ENCODE measurements at regions of chr17 and their contacts with region 1.

Region 1: DNA sequence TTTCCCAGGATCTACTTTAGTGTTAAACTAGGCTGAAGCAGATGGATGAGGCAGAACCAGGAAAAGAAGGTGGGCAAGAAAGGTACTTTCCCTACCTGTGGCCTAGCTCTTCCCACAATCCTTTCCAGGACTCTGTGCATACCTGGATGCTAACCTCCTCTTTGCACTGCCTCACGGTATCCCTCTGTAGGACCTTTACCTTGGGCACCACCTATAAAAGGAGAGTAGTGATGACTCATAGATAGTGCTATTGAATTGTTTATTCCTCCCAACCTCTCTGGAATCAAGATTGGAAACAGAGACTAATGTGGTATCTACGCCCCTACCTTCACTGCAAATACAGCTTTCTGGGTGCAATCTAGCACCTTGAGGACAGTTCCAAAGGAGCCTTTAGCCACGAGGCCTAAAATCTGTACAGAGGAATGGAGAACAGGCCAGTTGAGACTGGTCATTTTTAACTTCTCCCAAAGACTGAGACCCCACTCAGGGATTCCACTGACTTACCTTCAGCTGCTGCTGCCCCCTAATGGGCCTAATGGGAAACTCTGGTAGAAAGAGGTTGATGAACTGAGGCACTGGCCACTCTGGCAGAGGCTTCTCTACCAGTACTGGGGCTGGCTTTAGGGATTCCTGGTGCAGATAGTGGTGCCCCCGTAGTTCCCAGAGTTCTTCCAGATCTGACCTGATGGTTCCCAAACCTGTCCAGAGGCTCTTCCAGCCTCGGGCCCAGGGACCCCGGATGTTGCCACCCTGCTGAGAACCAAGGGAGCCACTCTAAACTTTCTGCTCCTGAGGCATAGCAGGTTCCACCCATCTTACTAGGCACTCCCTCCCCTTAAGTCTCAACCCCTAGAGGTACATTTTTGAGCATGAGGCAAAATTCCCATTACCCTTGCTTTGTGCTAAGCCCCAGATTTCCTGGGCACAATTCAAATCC is 781 bp downstream of the RSKR start:
- DNase-seq: peak; percentile 39 to 56
- ATAC-seq: peak; percentile 56 to 79; a peak in 3 of 6 replicates
- H3K4me3 ChIP-seq: no peak overlapping the region
- H3K27ac ChIP-seq: no peak overlapping the region
- H3K4me1 ChIP-seq: no peaks in the 10 kb centered on the region
- CTCF ChIP-seq: peak; percentile 67
- EP300 ChIP-seq: no peak
- POLR2A ChIP-seq: no peak
- RAD21 ChIP-seq: peak; percentile 47 to 58; a peak in 4 of 5 replicates

Region 2: GRCh38 chr17:28552246-28552999 is 60.8 kb before region 1 on chr17 and contains the start of gene UNC119:
- CTCF ChIA-PET with region 1: interaction called, 20 read pairs
- POLR2A ChIA-PET with region 1: no interaction called
- DNase-seq: peak; percentile 59 to 89
- ATAC-seq: peak; percentile 75 to 91
- H3K4me3 ChIP-seq: peak within 1 kb of the TSS; percentile 97
- H3K27ac ChIP-seq: peak within 1 kb of the TSS; percentile 79 to 90
- H3K4me1 ChIP-seq: peaks cover 11% of the 10 kb centered on the region
- CTCF ChIP-seq: no peak
- EP300 ChIP-seq: no peak
- POLR2A ChIP-seq: peak; percentile 88
- RAD21 ChIP-seq: no peak
- polyA plus RNA-seq, gene UNC119: 50.5 and 53.5 TPM in 2 replicates

Region 3: DNA sequence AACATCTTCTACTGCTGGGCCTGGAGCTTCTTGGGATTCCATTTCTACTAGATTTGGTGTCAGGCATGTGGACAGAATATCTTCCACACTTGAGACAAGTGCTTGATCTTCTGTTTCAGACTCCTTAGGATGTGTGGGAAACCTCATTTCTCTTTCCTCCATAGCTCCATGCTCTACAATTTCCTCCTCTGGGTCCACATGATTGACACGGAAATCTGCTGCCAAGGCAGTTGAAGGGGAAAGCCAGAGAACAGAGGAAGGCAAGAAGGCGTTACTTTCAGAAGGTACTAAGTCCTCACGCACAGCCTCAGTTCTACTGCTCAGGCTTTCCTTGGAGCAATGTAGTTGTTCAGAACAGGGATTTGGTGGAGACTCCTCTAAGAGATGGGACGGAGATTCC is 20.9 kb before region 1 on chr17:
- CTCF ChIA-PET with region 1: interaction called, 10 read pairs
- POLR2A ChIA-PET with region 1: no interaction called
- DNase-seq: no peak
- ATAC-seq: no peak
- H3K4me3 ChIP-seq: no peak overlapping the region
- H3K27ac ChIP-seq: no peak overlapping the region
- H3K4me1 ChIP-seq: peaks cover under 1% of the 10 kb centered on the region; the same call in 1 of the 3 replicates
- CTCF ChIP-seq: no peak
- EP300 ChIP-seq: no peak
- POLR2A ChIP-seq: no peak
- RAD21 ChIP-seq: no peak

Region 4: GRCh38 chr17:28598799-28599310 is 14.3 kb before region 1 on chr17 and contains the start of gene SPAG5:
- CTCF ChIA-PET with region 1: interaction called, 20 read pairs
- POLR2A ChIA-PET with region 1: interaction called, 4 read pairs
- DNase-seq: peak; percentile 95 to 99
- ATAC-seq: peak; percentile 91 to 96
- H3K4me3 ChIP-seq: peak within 1 kb of the TSS; percentile 79
- H3K27ac ChIP-seq: peak within 1 kb of the TSS; percentile 79 to 88
- H3K4me1 ChIP-seq: peaks cover 17% of the 10 kb centered on the region
- CTCF ChIP-seq: no peak
- EP300 ChIP-seq: no peak
- POLR2A ChIP-seq: peak; percentile 83
- RAD21 ChIP-seq: no peak
- polyA plus RNA-seq, gene SPAG5: 111 and 123 TPM in 2 replicates

Region 5: DNA sequence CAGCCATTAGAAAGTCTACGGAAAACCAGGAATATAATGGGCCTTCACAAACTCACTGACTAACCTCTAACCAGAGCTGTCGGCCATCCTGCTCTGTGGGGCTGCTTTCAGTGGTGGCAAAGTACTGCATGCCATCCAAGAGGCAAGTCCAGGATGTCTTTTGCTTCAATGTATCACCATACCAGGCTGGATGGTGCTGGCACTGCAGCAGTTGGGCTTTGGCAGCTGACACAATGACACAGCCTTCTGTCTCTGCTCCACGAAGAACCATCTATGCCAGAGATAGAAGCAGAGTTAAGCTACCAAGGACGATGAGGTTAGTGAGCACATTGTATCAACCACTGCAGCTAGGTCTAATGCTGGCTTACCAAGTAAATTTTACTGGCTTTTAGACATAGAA is 10.5 kb after region 1 on chr17:
- CTCF ChIA-PET with region 1: interaction called, 13 read pairs
- POLR2A ChIA-PET with region 1: interaction called, 3 read pairs
- DNase-seq: no peak
- ATAC-seq: no peak
- H3K4me3 ChIP-seq: no peak overlapping the region
- H3K27ac ChIP-seq: no peak overlapping the region
- H3K4me1 ChIP-seq: no peaks in the 10 kb centered on the region
- CTCF ChIP-seq: no peak
- EP300 ChIP-seq: no peak
- POLR2A ChIP-seq: no peak
- RAD21 ChIP-seq: no peak

Region 6: GRCh38 chr17:28634206-28634856 is 21.1 kb after region 1 on chr17:
- CTCF ChIA-PET with region 1: interaction called, 11 read pairs
- POLR2A ChIA-PET with region 1: no interaction called
- DNase-seq: no peak
- ATAC-seq: no peak
- H3K4me3 ChIP-seq: no peak overlapping the region
- H3K27ac ChIP-seq: no peak overlapping the region
- H3K4me1 ChIP-seq: no peaks in the 10 kb centered on the region
- CTCF ChIP-seq: no peak
- EP300 ChIP-seq: no peak
- POLR2A ChIP-seq: no peak
- RAD21 ChIP-seq: no peak

Measured in A549 (cell line).